ENCODE measurements at regions of chr6 and their contacts with region 1.

Region 1: DNA sequence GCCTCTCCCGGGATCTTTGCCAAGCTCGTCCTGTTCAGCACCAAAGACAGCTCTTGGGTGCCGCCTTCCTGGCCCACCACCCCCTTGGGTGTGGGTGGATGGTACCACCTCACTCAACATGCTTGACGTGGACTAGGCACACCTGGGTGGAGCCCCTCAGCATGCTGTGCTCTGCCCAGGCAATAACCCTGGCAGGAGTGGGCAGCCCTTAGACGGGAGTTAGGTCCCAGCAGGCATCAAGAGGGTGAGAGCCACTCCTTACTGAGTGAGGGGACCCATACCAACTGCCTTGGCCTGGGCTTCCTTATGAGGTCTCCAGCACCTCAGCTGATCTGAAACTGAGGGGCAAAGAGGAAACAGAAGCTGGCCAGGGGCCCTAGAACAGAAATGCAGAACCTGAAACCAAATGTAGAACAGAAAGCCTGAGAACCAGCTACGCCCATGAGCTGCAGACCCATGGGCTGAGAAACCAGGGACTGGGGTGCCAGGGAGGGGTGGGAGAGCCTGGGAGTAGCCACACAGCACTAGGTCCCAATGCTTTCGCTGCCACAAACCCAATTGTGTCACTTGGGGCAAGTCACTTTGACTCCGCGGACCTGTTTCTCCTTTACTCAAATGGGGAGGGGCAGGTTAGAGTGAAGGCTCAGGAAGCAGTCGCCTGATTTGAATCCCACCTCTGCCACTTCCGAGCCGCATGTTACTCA is 2.0 kb downstream of the FGD2 start:
- DNase-seq: no peak
- ATAC-seq: no peak
- H3K4me3 ChIP-seq: no peak overlapping the region
- H3K27ac ChIP-seq: no peak overlapping the region
- H3K4me1 ChIP-seq: no peaks in the 10 kb centered on the region
- H3K27me3 ChIP-seq: no peaks in the 10 kb centered on the region
- CTCF ChIP-seq: no peak

Region 2: DNA sequence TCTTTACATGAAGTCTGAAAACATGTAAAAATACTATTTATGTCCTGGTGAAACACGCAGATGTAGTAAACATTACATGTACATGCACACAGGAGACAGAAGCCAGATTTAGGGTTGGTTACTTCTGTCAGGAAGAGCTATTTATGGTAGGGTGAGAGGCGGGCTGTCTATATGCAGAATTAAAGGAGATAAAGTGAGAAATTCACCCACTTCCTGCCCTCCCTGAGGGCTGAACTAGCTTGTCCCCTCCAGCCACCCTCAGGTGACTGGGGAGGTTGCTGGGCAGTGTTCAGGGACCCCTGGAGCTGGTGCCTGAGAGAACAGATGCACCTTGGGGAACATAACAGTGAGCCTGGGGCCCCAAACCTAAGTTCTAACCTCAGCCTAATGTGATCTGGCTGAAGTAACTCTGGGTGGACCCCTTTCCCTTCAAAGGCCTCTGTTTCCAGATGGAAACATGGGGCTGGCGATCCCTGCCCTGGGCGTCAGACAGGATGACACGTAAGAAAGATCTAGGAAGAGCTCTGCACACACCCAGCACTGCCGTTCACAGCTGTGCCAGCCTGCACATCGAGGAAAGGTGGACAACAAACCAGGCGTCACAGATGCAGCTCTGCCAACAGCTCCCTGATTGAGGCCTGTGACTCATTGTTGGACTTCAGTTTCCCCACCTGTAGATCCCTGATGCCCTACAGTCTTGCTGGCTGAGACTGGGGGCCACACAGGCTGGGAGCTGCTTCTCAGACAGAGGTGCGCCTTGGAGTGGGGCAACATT is 51.6 kb before region 1 on chr6:
- CTCF ChIA-PET with region 1: no interaction called
- POLR2A ChIA-PET with region 1: interaction called, 11 read pairs
- in situ Hi-C with region 1: no loop called
- intact Hi-C with region 1: no loop called
- DNase-seq: no peak
- ATAC-seq: peak; percentile 19; the same call in 1 of the 2 replicates
- H3K4me3 ChIP-seq: no peak overlapping the region
- H3K27ac ChIP-seq: no peak overlapping the region
- H3K4me1 ChIP-seq: peaks cover 3% of the 10 kb centered on the region; the same call in 1 of the 2 replicates
- H3K27me3 ChIP-seq: no peaks in the 10 kb centered on the region
- CTCF ChIP-seq: no peak

Region 3: GRCh38 chr6:37077905-37078296 is 70.4 kb after region 1 on chr6:
- CTCF ChIA-PET with region 1: no interaction called
- POLR2A ChIA-PET with region 1: no interaction called
- in situ Hi-C with region 1: no loop called
- intact Hi-C with region 1: no loop called
- DNase-seq: no peak
- ATAC-seq: peak; percentile 52
- H3K4me3 ChIP-seq: no peak overlapping the region
- H3K27ac ChIP-seq: no peak overlapping the region
- H3K4me1 ChIP-seq: no peaks in the 10 kb centered on the region
- H3K27me3 ChIP-seq: no peaks in the 10 kb centered on the region
- CTCF ChIP-seq: no peak

Region 4: GRCh38 chr6:37507690-37508421 is 500.4 kb after region 1 on chr6:
- CTCF ChIA-PET with region 1: no interaction called
- POLR2A ChIA-PET with region 1: interaction called, 10 read pairs
- in situ Hi-C with region 1: no loop called
- intact Hi-C with region 1: no loop called
- DNase-seq: no peak
- ATAC-seq: no peak
- H3K4me3 ChIP-seq: no peak overlapping the region
- H3K27ac ChIP-seq: peak overlapping the region; percentile 52; the same call in 1 of the 2 replicates
- H3K4me1 ChIP-seq: peaks cover 23% of the 10 kb centered on the region
- H3K27me3 ChIP-seq: no peaks in the 10 kb centered on the region
- CTCF ChIP-seq: no peak